ENCODE measurements at regions of chr12 and their contacts with region 1.

Region 1: GRCh38 chr12:3218228-3219171 is 141.3 kb downstream of the TSPAN9 start:
- DNase-seq: peak; percentile 47
- H3K4me3 ChIP-seq: no peak overlapping the region
- H3K27ac ChIP-seq: peak overlapping the region; percentile 72
- H3K4me1 ChIP-seq: peaks cover 33% of the 10 kb centered on the region
- H3K27me3 ChIP-seq: no peaks in the 10 kb centered on the region
- CTCF ChIP-seq: no peak

Region 2: GRCh38 chr12:3261782-3262359 is 43.4 kb after region 1 on chr12:
- CTCF ChIA-PET with region 1: no interaction called
- dilution Hi-C with region 1: no loop called
- in situ Hi-C with region 1: no loop called
- intact Hi-C with region 1: loop called (anchors 5 kb)
- DNase-seq: no peak
- H3K4me3 ChIP-seq: no peak overlapping the region
- H3K27ac ChIP-seq: no peak overlapping the region
- H3K4me1 ChIP-seq: no peaks in the 10 kb centered on the region
- H3K27me3 ChIP-seq: no peaks in the 10 kb centered on the region
- CTCF ChIP-seq: no peak